Right ventricle myocardium superior (tissue), 1 donor: ENCODE measurements at regions of chr11 and their contacts with region 1.

Region 1: GRCh38 chr11:2151500-2152257 is 9.3 kb downstream of the INS start:
- DNase-seq: peak; percentile 74
- ATAC-seq: peak; percentile 80

Region 2: GRCh38 chr11:1652771-1653540 is 498.7 kb before region 1 on chr11:
- intact Hi-C with region 1: loop called (anchors 5 kb)
- DNase-seq: peak; percentile 85
- ATAC-seq: peak; percentile 88

Region 3: DNA sequence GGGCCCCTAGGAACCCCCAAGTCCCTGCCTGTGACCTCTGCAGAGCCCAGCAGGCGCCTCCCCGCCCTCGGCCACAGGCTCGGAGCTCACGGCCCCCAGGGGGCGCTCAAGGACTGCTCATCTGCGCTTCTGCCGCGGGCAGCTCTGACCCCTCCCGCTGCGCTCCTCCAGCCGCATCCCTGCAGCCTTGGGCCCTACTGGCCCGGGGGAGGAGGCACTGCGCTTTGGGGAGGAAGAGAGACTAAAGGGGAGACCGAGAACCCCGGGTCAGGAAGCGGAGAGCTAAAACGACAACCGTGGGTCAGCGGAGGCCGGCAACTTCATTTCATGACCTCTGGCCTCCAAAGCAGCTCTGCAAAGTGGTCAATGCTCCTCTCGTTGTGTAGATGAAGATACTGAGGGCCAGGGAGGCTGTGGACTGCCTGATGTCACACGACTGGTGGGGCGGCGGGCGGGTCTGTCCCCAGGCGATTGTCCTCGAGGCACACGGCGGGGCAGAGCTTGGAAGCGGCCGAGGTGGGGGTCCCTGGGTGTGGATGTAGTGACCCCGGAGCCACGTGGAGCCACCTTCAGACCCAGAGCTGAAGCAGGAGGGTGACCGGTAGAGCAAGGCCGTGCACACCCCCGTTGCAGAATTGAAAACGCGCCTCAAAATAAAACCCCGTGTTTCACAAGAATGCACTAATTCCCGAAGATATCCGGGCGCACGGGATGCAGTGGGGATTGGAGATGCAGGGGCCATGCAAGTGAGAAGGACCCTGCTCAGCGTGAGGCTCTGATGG is 457.4 kb before region 1 on chr11:
- intact Hi-C with region 1: loop called (anchors 5 kb)
- DNase-seq: peak; percentile 93
- ATAC-seq: peak; percentile 99

Region 4: DNA sequence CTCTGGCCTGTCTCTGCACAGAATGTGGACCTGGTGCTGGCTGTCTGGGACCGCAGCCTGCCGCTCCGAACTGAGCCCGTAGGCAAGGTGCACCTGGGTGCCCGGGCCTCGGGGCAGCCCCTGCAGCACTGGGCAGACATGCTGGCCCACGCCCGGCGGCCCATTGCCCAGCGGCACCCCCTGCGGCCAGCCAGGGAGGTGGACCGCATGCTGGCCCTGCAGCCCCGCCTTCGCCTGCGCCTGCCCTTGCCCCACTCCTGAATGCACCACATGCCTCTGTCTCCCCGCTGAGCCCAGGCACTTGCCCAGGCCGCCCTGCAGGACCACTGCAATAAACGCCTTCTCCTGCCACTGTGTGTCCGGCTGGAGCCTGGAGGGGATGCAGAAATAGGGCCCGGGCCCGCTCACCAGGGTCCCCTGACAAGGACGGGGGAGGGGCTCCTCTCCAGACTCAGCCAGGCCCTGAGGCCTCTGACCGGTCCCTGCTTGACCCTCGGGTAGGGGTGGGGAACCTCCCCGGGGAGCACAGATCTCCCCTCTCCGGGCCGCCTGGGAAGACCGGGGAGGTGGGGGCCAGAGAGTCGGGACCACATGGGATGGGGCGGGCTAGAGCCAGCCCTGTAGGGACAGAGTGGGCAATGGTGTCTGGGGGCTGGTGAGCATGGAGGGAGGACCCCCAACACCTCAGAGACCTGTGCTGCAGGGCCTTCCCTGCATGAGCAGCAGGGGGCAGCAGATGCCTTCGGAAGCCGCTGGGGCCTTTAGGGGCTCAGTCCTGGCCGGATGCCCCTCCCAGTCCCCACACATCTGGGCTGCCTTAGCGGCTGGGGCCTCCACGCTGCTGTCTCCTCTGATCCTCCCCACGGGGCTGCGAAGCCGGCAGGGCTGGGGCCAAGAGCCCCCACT is 314.3 kb before region 1 on chr11:
- intact Hi-C with region 1: loop called (anchors 5 kb)
- DNase-seq: peak; percentile 82
- ATAC-seq: peak; percentile 54

Region 5: GRCh38 chr11:1882519-1883238 is 269.0 kb before region 1 on chr11:
- intact Hi-C with region 1: loop called (anchors 10 kb)
- DNase-seq: peak; percentile 92
- ATAC-seq: peak; percentile 79

Region 6: DNA sequence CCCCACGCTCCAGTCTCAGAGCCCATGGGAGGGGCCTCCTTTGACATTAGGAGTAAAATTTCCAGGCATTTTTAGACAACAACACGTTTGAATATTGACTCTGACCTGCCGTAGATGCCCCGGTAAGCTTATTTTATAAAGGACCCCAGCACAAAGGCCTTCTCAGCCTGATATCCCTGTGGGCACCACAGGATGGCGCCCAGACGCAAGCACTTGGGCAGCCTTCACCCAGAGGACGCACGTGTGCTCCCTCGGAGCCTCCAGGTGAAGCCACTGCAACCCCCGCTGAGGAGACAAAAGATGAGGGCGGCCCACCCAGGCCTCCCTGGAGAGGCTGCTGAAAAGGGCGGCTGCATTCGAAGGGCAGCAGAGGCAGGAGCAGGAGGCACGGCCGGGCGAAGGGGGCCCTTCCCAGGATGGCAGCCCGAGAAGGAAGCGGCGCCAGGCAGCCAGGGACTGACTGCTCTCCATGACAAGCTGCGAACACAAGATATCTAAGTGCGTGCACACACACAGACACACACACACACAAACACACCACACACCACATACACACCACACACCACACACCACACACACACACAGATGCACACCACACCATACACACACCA is 35.1 kb after region 1 on chr11:
- intact Hi-C with region 1: no loop called
- DNase-seq: no peak
- ATAC-seq: peak; percentile 81

Region 7: GRCh38 chr11:2305140-2305840 is 153.6 kb after region 1 on chr11:
- intact Hi-C with region 1: no loop called
- DNase-seq: peak; percentile 94
- ATAC-seq: peak; percentile 48